ENCODE measurements at regions of chr16 and their contacts with region 1.

Region 1: GRCh38 chr16:68264128-68265077 is at the start of gene SLC7A6:
- DNase-seq: peak; percentile 79
- H3K4me3 Mint-ChIP-seq: peak within 1 kb of the TSS; percentile 93
- H3K27ac Mint-ChIP-seq: peak within 1 kb of the TSS; percentile 97
- H3K4me1 Mint-ChIP-seq: peaks cover 36% of the 10 kb centered on the region
- H3K27me3 Mint-ChIP-seq: no peaks in the 10 kb centered on the region
- total RNA-seq, gene SLC7A6: 107 and 108 TPM in 2 replicates

Region 2: GRCh38 chr16:68244903-68245853 is 19.2 kb before region 1 on chr16 and contains the start of gene PLA2G15:
- intact Hi-C with region 1: loop called (anchors 1 kb)
- DNase-seq: peak; percentile 92
- H3K4me3 Mint-ChIP-seq: peak within 1 kb of the TSS; percentile 94
- H3K27ac Mint-ChIP-seq: peak within 1 kb of the TSS; percentile 77
- H3K4me1 Mint-ChIP-seq: peaks cover 16% of the 10 kb centered on the region
- H3K27me3 Mint-ChIP-seq: no peaks in the 10 kb centered on the region
- total RNA-seq, gene PLA2G15: 9.0 and 10.3 TPM in 2 replicates

Region 3: GRCh38 chr16:68275611-68276191 is 11.3 kb after region 1 on chr16:
- intact Hi-C with region 1: loop called (anchors 1 kb)
- DNase-seq: peak; percentile 31
- H3K4me3 Mint-ChIP-seq: peak overlapping the region; percentile 44
- H3K27ac Mint-ChIP-seq: peak overlapping the region; percentile 76
- H3K4me1 Mint-ChIP-seq: peaks cover 51% of the 10 kb centered on the region
- H3K27me3 Mint-ChIP-seq: no peaks in the 10 kb centered on the region

Region 4: GRCh38 chr16:68310761-68311511 is 46.5 kb after region 1 on chr16 and contains the starts of genes PRMT7 and SLC7A6OS:
- intact Hi-C with region 1: loop called (anchors 1 kb)
- DNase-seq: peak; percentile 93
- H3K4me3 Mint-ChIP-seq: peak within 1 kb of the TSS; percentile 91
- H3K27ac Mint-ChIP-seq: peak within 1 kb of the TSS; percentile 87
- H3K4me1 Mint-ChIP-seq: peaks cover 29% of the 10 kb centered on the region
- H3K27me3 Mint-ChIP-seq: no peaks in the 10 kb centered on the region
- total RNA-seq, gene PRMT7: 80.5 and 90.7 TPM in 2 replicates
- total RNA-seq, gene SLC7A6OS: 24.7 and 26.7 TPM in 2 replicates

Region 5: DNA sequence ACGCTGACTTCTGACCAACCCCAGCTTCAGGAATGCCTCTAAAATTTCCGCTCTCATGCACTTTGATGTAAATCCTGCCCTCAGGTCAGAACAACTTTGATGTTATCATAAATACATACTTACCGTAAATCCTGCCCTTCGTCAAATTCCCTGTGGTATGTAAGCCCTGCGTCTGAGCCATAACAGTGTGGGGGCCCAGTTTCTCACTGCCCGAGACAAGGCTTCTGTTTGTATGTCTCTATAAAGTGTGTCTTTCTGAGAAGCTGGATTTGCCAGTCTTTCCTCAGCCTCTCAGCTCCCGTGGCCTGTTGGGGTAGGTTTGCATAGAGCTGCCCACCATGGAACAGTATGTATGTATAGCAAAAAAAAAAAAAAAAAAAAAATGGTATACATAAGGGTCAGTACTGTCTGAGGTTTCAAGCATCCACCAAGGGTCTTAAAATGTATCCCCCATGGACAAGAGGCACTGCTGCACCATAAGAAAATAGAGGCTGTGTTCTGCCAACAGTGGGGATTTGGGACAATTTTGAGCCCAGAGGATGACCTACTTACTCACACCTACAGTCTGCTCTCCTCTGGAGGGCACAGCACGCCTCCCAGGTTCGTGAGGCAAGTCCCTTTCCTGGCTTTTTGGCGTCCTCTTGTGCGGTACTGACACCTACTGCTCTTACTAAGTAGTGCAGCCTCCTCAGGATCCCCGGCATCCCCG is 63.9 kb after region 1 on chr16:
- intact Hi-C with region 1: loop called (anchors 1 kb)
- DNase-seq: peak; percentile 73
- H3K4me3 Mint-ChIP-seq: no peak overlapping the region
- H3K27ac Mint-ChIP-seq: peak overlapping the region; percentile 62
- H3K4me1 Mint-ChIP-seq: peaks cover 32% of the 10 kb centered on the region
- H3K27me3 Mint-ChIP-seq: no peaks in the 10 kb centered on the region